ENCODE measurements at regions of chr17 and their contacts with region 1.

Region 1: GRCh38 chr17:74368092-74369081 is 1.1 kb downstream of the GPR142 start:
- DNase-seq: peak; percentile 79
- ATAC-seq: peak; percentile 81
- H3K4me3 Mint-ChIP-seq: no peak overlapping the region
- H3K27ac Mint-ChIP-seq: no peak overlapping the region
- H3K4me1 Mint-ChIP-seq: peaks cover 9% of the 10 kb centered on the region
- H3K27me3 Mint-ChIP-seq: peaks cover 2% of the 10 kb centered on the region; the same call in 1 of the 2 replicates
- CTCF ChIP-seq: peak; percentile 95

Region 2: GRCh38 chr17:74296548-74296936 is 71.8 kb before region 1 on chr17:
- CTCF ChIA-PET with region 1: interaction called, 41 read pairs
- POLR2A ChIA-PET with region 1: no interaction called
- DNase-seq: peak; percentile 56
- ATAC-seq: peak; percentile 74
- H3K4me3 Mint-ChIP-seq: no peak overlapping the region
- H3K27ac Mint-ChIP-seq: no peak overlapping the region
- H3K4me1 Mint-ChIP-seq: no peaks in the 10 kb centered on the region
- H3K27me3 Mint-ChIP-seq: peaks cover 2% of the 10 kb centered on the region; the same call in 1 of the 2 replicates
- CTCF ChIP-seq: no peak; the same call in 1 of the 2 replicates

Region 3: GRCh38 chr17:74354123-74354522 is 14.3 kb before region 1 on chr17:
- CTCF ChIA-PET with region 1: interaction called, 52 read pairs
- POLR2A ChIA-PET with region 1: interaction called, 5 read pairs
- DNase-seq: peak; percentile 88
- ATAC-seq: peak; percentile 67
- H3K4me3 Mint-ChIP-seq: no peak overlapping the region
- H3K27ac Mint-ChIP-seq: no peak overlapping the region
- H3K4me1 Mint-ChIP-seq: peaks cover 10% of the 10 kb centered on the region
- H3K27me3 Mint-ChIP-seq: peaks cover 85% of the 10 kb centered on the region
- CTCF ChIP-seq: peak; percentile 65

Region 4: GRCh38 chr17:74437702-74438101 is 69.3 kb after region 1 on chr17:
- CTCF ChIA-PET with region 1: interaction called, 24 read pairs
- POLR2A ChIA-PET with region 1: no interaction called
- DNase-seq: peak; percentile 52
- ATAC-seq: no peak
- H3K4me3 Mint-ChIP-seq: no peak overlapping the region
- H3K27ac Mint-ChIP-seq: no peak overlapping the region
- H3K4me1 Mint-ChIP-seq: peaks cover 18% of the 10 kb centered on the region
- H3K27me3 Mint-ChIP-seq: peaks cover 11% of the 10 kb centered on the region
- CTCF ChIP-seq: peak; percentile 82

Region 5: GRCh38 chr17:74493381-74493833 is 125.0 kb after region 1 on chr17:
- CTCF ChIA-PET with region 1: interaction called, 26 read pairs
- POLR2A ChIA-PET with region 1: no interaction called
- DNase-seq: peak; percentile 88
- ATAC-seq: peak; percentile 96
- H3K4me3 Mint-ChIP-seq: no peak overlapping the region
- H3K27ac Mint-ChIP-seq: no peak overlapping the region
- H3K4me1 Mint-ChIP-seq: peaks cover 3% of the 10 kb centered on the region; the same call in 1 of the 2 replicates
- H3K27me3 Mint-ChIP-seq: peaks cover 6% of the 10 kb centered on the region
- CTCF ChIP-seq: peak; percentile 83

Region 6: DNA sequence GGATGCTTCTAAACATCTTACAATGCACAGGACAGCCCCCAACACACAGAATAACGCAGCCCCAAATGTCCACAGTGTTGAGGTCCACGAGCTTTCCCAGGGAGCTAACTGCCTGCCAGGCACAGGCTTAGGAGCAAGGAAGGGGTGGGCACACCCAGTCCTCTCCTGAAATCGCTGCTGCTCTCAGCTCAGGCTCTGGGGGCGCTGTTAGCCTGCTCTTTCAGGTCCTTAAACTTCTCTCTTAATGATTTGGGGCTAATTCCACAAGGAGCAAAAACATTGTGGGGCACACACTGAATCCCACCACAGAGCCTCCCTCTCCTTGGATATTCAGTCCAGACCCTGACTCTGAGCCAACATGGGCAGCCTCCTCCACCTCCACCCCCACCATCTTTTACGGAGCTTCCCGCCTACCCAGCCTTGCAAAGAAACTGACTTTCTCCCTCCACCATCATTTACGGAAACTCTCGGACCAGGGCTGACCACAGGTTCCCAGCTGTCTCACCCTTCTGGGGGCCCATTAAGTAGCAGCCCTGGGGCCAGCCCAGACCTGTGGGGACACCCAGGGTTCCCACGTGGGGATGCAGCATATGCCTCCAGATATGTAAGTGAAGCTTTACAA is 197.9 kb after region 1 on chr17:
- CTCF ChIA-PET with region 1: interaction called, 19 read pairs
- POLR2A ChIA-PET with region 1: no interaction called
- DNase-seq: peak; percentile 82
- ATAC-seq: peak; percentile 96
- H3K4me3 Mint-ChIP-seq: no peak overlapping the region
- H3K27ac Mint-ChIP-seq: no peak overlapping the region
- H3K4me1 Mint-ChIP-seq: peaks cover 7% of the 10 kb centered on the region; the same call in 1 of the 2 replicates
- H3K27me3 Mint-ChIP-seq: peaks cover 18% of the 10 kb centered on the region
- CTCF ChIP-seq: peak; percentile 77

Region 7: GRCh38 chr17:74748529-74749365 is 380.4 kb after region 1 on chr17 and contains the start of gene NHERF1:
- CTCF ChIA-PET with region 1: interaction called, 11 read pairs
- POLR2A ChIA-PET with region 1: no interaction called
- DNase-seq: peak; percentile 61
- ATAC-seq: peak; percentile 86
- H3K4me3 Mint-ChIP-seq: peak within 1 kb of the TSS; percentile 92
- H3K27ac Mint-ChIP-seq: peak within 1 kb of the TSS; percentile 57
- H3K4me1 Mint-ChIP-seq: peaks cover 64% of the 10 kb centered on the region
- H3K27me3 Mint-ChIP-seq: peaks cover 3% of the 10 kb centered on the region; the same call in 1 of the 2 replicates
- CTCF ChIP-seq: no peak
- total RNA-seq, gene NHERF1: 86.9 to 111 TPM (median 97.1 TPM) in 3 replicates

Measured in WTC11 (cell line).